Sigmoid colon (tissue), 7 donors: ENCODE measurements at regions of chr4 and their contacts with region 1.

Region 1: DNA sequence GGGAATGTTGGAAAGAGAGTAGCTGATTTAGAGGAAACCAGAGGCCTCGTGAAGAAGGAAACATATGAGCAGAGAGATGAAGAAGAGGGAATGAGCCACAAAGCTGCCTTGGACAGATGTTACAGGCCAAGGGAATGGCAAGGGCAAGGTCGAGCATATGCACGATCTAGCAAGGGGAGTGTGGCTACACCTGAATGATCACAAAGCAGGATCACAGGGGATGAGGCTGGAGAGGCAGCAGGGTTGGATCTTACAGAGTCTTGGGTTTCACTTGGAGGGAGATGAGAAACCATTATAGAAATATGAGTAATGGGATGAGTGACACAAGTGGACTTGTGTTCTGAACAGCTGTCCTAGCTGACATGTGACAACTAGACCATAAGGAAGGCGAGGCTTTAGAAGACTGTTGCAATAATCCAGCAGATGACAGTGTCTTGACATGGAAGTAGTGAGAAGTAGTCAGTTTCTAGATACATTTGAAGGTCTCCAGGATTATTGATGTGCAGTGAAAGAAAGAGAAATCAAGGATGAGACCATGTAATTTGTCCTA is 58.7 kb downstream of the RASGEF1B start:
- DNase-seq: no peak
- H3K4me3 ChIP-seq: no peak overlapping the region
- H3K27ac ChIP-seq: no peak overlapping the region
- H3K4me1 ChIP-seq: no peaks in the 10 kb centered on the region
- H3K27me3 ChIP-seq: no peaks in the 10 kb centered on the region
- CTCF ChIP-seq: no peak
- EP300 ChIP-seq: no peak
- POLR2A ChIP-seq: no peak

Region 2: DNA sequence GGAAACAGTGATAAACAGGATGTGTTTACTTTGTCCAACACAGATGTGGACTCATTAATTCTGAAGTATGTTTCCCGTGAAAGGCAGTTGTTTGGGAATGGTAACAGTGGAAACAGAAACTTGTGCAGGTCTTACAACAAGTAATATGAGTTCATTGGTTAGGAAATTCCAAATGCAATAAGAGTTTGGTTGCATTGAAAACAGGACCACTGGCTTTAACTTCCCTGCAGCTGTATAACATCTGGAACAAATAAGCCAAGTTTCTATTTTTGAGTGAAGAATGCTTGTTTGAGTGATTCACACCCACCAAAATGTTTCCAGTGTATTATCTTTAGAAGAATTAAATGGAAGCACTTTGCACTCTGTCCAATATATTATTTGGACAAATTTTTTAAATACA is 464.9 kb before region 1 on chr4:
- intact Hi-C with region 1: no loop called
- DNase-seq: no peak
- H3K4me3 ChIP-seq: no peak overlapping the region
- H3K27ac ChIP-seq: no peak overlapping the region
- H3K4me1 ChIP-seq: no peaks in the 10 kb centered on the region
- H3K27me3 ChIP-seq: no peaks in the 10 kb centered on the region
- CTCF ChIP-seq: no peak
- EP300 ChIP-seq: no peak
- POLR2A ChIP-seq: no peak

Region 3: GRCh38 chr4:81397635-81398034 is 15.4 kb before region 1 on chr4:
- intact Hi-C with region 1: loop called (anchors 1 kb)
- DNase-seq: no peak
- H3K4me3 ChIP-seq: no peak overlapping the region
- H3K27ac ChIP-seq: no peak overlapping the region
- H3K4me1 ChIP-seq: no peaks in the 10 kb centered on the region
- H3K27me3 ChIP-seq: no peaks in the 10 kb centered on the region
- CTCF ChIP-seq: no peak
- EP300 ChIP-seq: no peak
- POLR2A ChIP-seq: no peak